Posterior vena cava (tissue), 2 donors: ENCODE measurements at regions of chr5 and their contacts with region 1.

Region 1: GRCh38 chr5:157283434-157283833 is 17.5 kb downstream of the CYFIP2 start:
- DNase-seq: no peak

Region 2: GRCh38 chr5:157689942-157690689 is 406.7 kb after region 1 on chr5:
- intact Hi-C with region 1: loop called in 1 of 2 experiments (anchors 5 kb)
- DNase-seq: no peak